CD8-positive, alpha-beta T cell (primary cell): ENCODE measurements at regions of chr19 and their contacts with region 1.

Region 1: DNA sequence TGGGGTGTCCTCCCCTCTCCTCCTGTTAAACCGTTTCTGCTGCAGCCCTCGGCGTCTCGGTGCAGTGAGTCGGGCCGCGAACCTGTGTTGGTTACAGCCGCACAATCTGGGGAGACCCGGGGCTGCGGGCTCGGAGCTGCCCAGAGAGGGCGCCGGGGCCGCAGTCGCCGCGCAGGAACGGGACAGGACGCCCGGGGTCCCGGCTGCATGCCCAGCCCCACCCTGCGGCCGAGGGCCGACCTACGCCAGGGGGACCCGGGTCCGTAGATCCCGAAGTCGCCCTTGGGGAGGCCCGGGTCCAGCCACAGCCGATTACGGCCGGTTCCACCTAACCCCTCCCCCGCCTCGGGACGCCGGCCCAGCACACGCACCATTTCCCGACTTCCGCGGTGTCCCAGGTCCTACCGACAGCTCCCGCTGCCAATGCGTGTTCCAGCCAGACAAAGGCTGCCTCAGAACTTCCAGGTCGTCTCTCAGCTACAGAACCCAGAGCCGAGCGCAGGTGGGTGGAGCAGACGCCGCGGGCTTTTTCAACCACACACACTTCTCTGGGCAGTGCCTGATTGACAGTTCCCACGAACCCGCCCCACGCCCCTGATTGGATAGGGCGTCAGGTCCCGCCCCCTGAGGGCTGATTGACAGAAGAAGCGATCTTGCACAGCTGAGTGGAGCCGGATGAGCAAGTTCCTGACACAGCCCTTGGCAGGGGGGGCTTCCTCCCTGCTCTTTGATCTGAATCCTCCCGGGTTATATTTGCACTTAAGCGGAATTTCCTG is at the start of gene ZNF443:
- DNase-seq: peak; percentile 97 to 99 (median 98)
- ATAC-seq: peak; percentile 97
- H3K4me3 ChIP-seq: peak within 1 kb of the TSS; percentile 55 to 87
- H3K4me3 Mint-ChIP-seq: peak within 1 kb of the TSS; percentile 100
- H3K27ac ChIP-seq: peak within 1 kb of the TSS; percentile 26 to 46
- H3K27ac Mint-ChIP-seq: peak within 1 kb of the TSS; percentile 92
- H3K4me1 ChIP-seq: no peaks in the 10 kb centered on the region
- H3K4me1 Mint-ChIP-seq: peaks cover 19% of the 10 kb centered on the region
- H3K27me3 ChIP-seq: no peaks in the 10 kb centered on the region
- H3K27me3 Mint-ChIP-seq: no peaks in the 10 kb centered on the region
- CTCF ChIP-seq: no peak
- total RNA-seq, gene ZNF443: 2.1 to 2.6 TPM

Region 2: GRCh38 chr19:11111117-11111774 is 1329.5 kb before region 1 on chr19:
- CTCF ChIA-PET with region 1: no interaction called
- POLR2A ChIA-PET with region 1: no interaction called
- intact Hi-C with region 1: no loop called
- DNase-seq: no peak
- ATAC-seq: no peak
- H3K4me3 ChIP-seq: no peak overlapping the region
- H3K4me3 Mint-ChIP-seq: no peak overlapping the region
- H3K27ac ChIP-seq: no peak overlapping the region
- H3K27ac Mint-ChIP-seq: no peak overlapping the region
- H3K4me1 ChIP-seq: no peaks in the 10 kb centered on the region
- H3K4me1 Mint-ChIP-seq: no peaks in the 10 kb centered on the region
- H3K27me3 ChIP-seq: no peaks in the 10 kb centered on the region
- H3K27me3 Mint-ChIP-seq: no peaks in the 10 kb centered on the region
- CTCF ChIP-seq: no peak

Region 3: DNA sequence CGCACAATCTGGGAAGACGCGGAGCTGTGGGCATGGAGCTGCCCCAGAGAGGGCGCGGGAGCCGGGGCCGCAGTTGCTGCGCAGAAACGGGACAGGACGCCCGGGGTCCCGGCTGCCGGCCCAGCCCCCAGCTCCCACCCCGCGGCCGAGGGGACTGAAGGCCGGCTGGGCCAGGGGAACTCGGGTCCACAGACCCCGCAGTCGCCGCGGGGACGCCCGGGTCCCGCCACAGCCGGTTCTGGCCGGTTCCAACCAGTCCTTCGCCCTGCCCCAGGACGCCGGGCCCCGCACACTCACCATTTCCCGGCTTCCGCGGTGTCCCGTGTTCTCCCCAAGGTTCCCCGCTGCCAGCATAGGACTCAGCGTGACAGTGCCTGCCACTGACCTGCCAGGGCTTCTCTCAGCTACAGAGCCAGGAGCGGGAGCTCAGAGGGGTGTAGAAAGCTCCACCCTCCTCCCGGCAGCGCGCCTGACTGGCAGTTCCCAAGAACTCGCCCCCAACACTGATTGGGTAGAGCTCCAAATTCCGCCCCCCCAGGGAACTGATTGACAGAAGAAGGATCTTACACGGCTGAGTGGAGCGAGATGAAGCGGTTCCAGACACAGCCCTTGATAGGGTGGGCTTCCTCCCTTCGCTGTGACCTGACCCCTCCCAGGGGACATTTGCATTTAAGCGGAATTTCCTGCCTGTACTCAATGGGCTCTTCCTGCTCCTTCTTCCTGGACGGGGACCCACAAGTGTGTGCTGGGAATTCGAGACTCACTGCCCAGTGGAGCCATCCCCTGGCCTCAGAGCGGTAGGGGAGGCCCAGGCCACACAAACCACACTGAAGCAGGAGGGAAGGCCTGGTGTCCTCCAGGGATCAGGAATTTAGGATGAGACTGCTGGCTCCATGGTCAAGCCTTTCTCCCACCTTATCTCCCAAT is 75.2 kb before region 1 on chr19 and contains the start of gene ZNF442:
- CTCF ChIA-PET with region 1: no interaction called
- POLR2A ChIA-PET with region 1: no interaction called
- intact Hi-C with region 1: loop called in 1 of 2 experiments (anchors 2 kb)
- DNase-seq: peak; percentile 54 to 91 (median 85)
- ATAC-seq: peak; percentile 98
- H3K4me3 ChIP-seq: peak within 1 kb of the TSS; percentile 64 to 65
- H3K4me3 Mint-ChIP-seq: peak within 1 kb of the TSS; percentile 97
- H3K27ac ChIP-seq: peak within 1 kb of the TSS in 1 of 2 experiments; percentile 34
- H3K27ac Mint-ChIP-seq: peak within 1 kb of the TSS; percentile 84
- H3K4me1 ChIP-seq: peaks cover 13% of the 10 kb centered on the region
- H3K4me1 Mint-ChIP-seq: peaks cover 24% of the 10 kb centered on the region
- H3K27me3 ChIP-seq: peaks cover 0 to 2% of the 10 kb centered on the region in 2 experiments
- H3K27me3 Mint-ChIP-seq: no peaks in the 10 kb centered on the region
- CTCF ChIP-seq: no peak
- total RNA-seq, gene ZNF442: 1.00 to 1.0 TPM

Region 4: GRCh38 chr19:12400633-12401502 is 39.9 kb before region 1 on chr19 and contains the start of gene ZNF799:
- CTCF ChIA-PET with region 1: no interaction called
- POLR2A ChIA-PET with region 1: interaction called, 3 read pairs
- intact Hi-C with region 1: loop called (anchors 1 to 2 kb)
- DNase-seq: peak; percentile 38 to 88 (median 81)
- ATAC-seq: peak; percentile 91
- H3K4me3 ChIP-seq: peak within 1 kb of the TSS; percentile 94 to 96
- H3K4me3 Mint-ChIP-seq: peak within 1 kb of the TSS; percentile 90
- H3K27ac ChIP-seq: peak within 1 kb of the TSS; percentile 37 to 58
- H3K27ac Mint-ChIP-seq: peak within 1 kb of the TSS; percentile 81
- H3K4me1 ChIP-seq: peaks cover 4% of the 10 kb centered on the region
- H3K4me1 Mint-ChIP-seq: peaks cover 27% of the 10 kb centered on the region
- H3K27me3 ChIP-seq: no peaks in the 10 kb centered on the region
- H3K27me3 Mint-ChIP-seq: no peaks in the 10 kb centered on the region
- CTCF ChIP-seq: no peak
- total RNA-seq, gene ZNF799: 1.1 TPM

Region 5: GRCh38 chr19:12484371-12485051 is 43.8 kb after region 1 on chr19 and contains the start of gene ZNF709:
- CTCF ChIA-PET with region 1: no interaction called
- POLR2A ChIA-PET with region 1: no interaction called
- intact Hi-C with region 1: loop called (anchors 1 to 2 kb)
- DNase-seq: peak; percentile 78 to 93 (median 90)
- ATAC-seq: peak; percentile 98
- H3K4me3 ChIP-seq: peak within 1 kb of the TSS; percentile 92 to 93
- H3K4me3 Mint-ChIP-seq: peak within 1 kb of the TSS; percentile 94
- H3K27ac ChIP-seq: peak within 1 kb of the TSS; percentile 73 to 76
- H3K27ac Mint-ChIP-seq: peak within 1 kb of the TSS; percentile 94
- H3K4me1 ChIP-seq: peaks cover 23% of the 10 kb centered on the region
- H3K4me1 Mint-ChIP-seq: peaks cover 31% of the 10 kb centered on the region
- H3K27me3 ChIP-seq: no peaks in the 10 kb centered on the region
- H3K27me3 Mint-ChIP-seq: no peaks in the 10 kb centered on the region
- CTCF ChIP-seq: no peak
- total RNA-seq, gene ZNF709: 4.3 to 4.5 TPM

Region 6: DNA sequence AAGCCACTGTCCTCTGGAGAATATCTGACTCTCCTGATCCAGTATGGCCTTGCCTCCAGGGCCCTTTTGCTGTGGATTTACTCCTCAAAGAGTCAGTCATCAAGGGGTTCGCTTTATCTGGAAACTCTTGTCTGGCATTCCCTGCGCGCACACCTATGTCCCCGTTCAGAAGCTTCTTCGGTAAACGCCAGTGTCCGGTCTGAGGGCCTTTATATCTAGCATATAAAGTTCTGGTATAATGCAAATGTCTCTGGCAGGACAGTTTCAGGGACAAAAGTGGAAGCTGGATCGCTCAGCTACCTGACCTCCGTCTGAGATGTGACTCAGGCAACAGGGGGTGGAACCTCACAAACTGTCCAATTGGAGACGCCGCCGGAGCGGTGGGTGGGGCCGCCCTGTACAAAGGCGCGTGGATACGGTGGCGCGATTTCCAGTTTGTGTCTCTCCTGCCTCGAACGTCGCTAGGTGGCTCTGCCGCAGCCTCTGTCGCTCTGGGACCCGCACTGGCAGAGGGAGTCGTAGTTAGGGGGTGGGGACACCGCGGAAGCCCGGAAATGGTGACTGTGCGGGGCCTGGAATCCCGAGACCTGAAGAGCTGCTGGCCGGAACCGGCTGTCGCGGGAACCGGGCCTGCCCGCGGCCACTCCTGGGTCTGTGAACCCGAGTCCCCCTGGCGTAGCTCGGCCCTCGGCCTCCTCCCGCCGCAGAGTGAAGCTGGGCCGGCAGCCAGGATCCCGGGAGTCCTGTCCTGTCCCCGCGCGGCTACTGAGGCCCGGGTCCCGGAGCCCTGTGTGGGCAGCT is 54.5 kb after region 1 on chr19:
- CTCF ChIA-PET with region 1: no interaction called
- POLR2A ChIA-PET with region 1: interaction called, 5 read pairs
- intact Hi-C with region 1: loop called (anchors 1 kb)
- DNase-seq: peak; percentile 81 to 96 (median 93)
- ATAC-seq: peak; percentile 99
- H3K4me3 ChIP-seq: peak overlapping the region; percentile 53 to 64
- H3K4me3 Mint-ChIP-seq: peak overlapping the region; percentile 91
- H3K27ac ChIP-seq: peak overlapping the region; percentile 68 to 79
- H3K27ac Mint-ChIP-seq: peak overlapping the region; percentile 94
- H3K4me1 ChIP-seq: peaks cover 8% of the 10 kb centered on the region
- H3K4me1 Mint-ChIP-seq: peaks cover 18% of the 10 kb centered on the region
- H3K27me3 ChIP-seq: no peaks in the 10 kb centered on the region
- H3K27me3 Mint-ChIP-seq: no peaks in the 10 kb centered on the region
- CTCF ChIP-seq: peak; percentile 55

Region 7: DNA sequence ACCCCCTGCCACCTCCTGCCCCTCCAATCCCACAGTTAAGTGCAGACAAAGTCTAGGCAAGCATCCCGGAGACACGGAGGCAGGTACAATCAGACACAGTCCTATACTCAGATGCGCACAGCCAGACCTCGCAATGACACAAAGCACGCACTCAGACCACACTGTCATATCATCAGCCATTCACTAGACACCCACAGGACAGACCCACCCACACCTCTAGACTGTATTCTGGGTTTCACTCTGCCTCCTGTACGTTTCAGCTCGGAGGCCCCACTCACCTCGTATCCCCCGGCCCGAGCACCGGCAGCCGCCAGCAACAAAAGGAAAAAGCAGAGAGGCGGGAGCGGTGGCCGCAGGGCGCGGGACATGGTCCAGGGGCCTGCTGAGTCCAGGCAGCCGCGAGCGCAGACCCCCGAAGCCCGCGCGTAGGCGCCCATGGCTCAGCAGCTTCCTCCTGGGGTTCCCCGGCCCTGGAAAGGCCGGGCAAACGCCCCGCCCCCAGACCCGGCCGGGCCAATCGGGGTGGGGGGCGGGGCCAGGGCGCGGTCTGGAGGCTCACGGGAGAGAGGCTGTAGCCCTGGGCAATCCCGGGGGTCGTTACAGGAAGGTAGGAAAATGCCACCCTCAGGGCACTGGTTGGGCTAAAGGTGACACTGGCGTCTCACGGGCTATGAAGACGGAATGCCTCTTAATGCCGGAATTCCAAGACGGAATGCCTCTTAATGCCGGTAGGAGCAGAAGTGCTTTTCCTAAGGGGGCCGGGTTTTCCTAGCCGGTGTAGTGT is 225.7 kb after region 1 on chr19 and contains the starts of genes MAN2B1 and WDR83:
- CTCF ChIA-PET with region 1: no interaction called
- POLR2A ChIA-PET with region 1: no interaction called
- intact Hi-C with region 1: loop called in 1 of 2 experiments (anchors 2 kb)
- DNase-seq: peak; percentile 57 to 92 (median 77)
- ATAC-seq: peak; percentile 72
- H3K4me3 ChIP-seq: peak within 1 kb of the TSS; percentile 82 to 84
- H3K4me3 Mint-ChIP-seq: peak within 1 kb of the TSS; percentile 90
- H3K27ac ChIP-seq: peak within 1 kb of the TSS; percentile 69 to 99
- H3K27ac Mint-ChIP-seq: peak within 1 kb of the TSS; percentile 94
- H3K4me1 ChIP-seq: peaks cover 46% of the 10 kb centered on the region
- H3K4me1 Mint-ChIP-seq: peaks cover 54% of the 10 kb centered on the region
- H3K27me3 ChIP-seq: no peaks in the 10 kb centered on the region
- H3K27me3 Mint-ChIP-seq: no peaks in the 10 kb centered on the region
- CTCF ChIP-seq: no peak
- total RNA-seq, gene MAN2B1: 74.8 to 82.2 TPM
- total RNA-seq, gene WDR83: 7.4 to 10.0 TPM